ENCODE measurements at regions of chr1 and their contacts with region 1.

Region 1: DNA sequence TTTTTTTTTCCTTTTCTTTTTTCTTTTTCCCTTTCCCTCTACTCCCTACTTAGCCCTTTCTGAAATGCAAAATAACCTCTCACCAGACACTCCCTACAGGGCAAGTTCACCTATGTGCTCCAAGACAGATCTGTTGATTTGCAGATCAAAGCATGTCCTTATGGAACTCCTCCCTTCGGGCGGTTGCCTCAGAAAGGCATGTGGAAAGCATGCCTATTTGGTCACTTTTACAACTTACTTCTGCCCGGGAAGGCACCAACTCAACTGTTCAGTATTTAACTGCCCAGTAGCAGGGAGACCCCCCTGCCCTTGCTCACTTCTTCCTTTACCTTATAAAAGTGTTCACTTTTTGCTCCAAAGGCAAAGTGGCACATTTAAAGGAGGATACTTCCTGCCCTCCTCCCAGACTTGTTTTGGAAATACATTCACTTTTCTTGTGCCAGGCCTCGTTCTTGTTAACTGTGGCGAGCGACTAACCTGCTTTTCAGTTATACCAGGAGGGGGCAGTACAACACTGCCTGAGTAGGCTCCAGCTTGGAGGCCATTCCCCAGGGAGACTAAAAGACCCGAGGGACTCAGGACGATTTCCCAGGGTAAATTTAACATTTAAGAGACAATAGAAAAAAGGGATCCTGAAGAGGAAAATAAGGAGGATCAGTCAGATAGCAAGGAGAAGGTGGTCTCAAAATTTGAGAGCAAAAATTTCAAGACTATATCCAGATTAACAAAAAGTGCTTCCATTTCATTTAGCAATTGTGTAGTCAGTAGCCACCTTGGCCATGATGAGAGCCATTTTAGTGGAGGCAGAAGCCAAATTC is 12.3 kb upstream of the SLAMF7 start:
- DNase-seq: no peak
- H3K4me3 ChIP-seq: peak overlapping the region in 1 of 8 donors; percentile 24
- H3K27ac ChIP-seq: peak overlapping the region in 5 of 8 donors; percentile 12 to 74 (median 66)
- H3K4me1 ChIP-seq: peaks cover 0 to 56% (median 24%) of the 10 kb centered on the region in 6 donors
- H3K27me3 ChIP-seq: no peaks in the 10 kb centered on the region
- CTCF ChIP-seq: peak; percentile 59 to 92 (median 83)
- POLR2A ChIP-seq: no peak

Region 2: GRCh38 chr1:160251011-160251410 is 475.7 kb before region 1 on chr1:
- intact Hi-C with region 1: no loop called
- DNase-seq: no peak
- H3K4me3 ChIP-seq: no peak overlapping the region
- H3K27ac ChIP-seq: no peak overlapping the region
- H3K4me1 ChIP-seq: peaks cover 0 to 27% (median 3%) of the 10 kb centered on the region in 6 donors
- H3K27me3 ChIP-seq: no peaks in the 10 kb centered on the region
- CTCF ChIP-seq: no peak
- POLR2A ChIP-seq: no peak

Region 3: DNA sequence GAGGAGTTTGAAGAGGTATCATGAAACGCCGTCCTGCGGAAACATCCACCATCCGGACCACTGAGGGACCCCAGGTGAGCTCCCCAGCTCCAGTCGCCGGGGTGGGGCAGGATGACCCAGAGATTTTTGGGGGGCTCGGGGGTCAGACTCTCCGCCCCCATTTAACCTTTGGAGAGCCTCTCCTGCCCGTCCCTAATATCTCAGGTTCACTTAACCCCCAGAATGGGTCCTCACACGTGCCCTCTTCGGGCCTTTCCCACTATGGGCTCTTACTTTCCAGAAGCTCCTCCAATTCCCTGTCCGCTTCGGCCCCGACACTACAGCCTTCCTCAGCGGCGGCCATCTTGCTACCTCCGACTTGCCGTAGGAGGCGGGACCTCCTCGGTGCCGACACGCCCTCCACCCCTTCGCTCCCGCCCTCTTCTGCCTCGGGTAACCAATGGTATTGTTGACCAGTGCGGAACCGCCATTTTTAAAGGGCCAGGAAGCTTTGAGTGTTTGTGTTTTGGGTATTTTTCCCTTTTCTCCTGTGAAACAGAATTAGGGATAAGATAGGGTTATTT is 441.8 kb before region 1 on chr1 and contains the start of gene PEX19:
- intact Hi-C with region 1: no loop called
- DNase-seq: peak; percentile 97
- H3K4me3 ChIP-seq: peak within 1 kb of the TSS; percentile 65 to 97 (median 86)
- H3K27ac ChIP-seq: peak within 1 kb of the TSS; percentile 82 to 91 (median 86)
- H3K4me1 ChIP-seq: peaks cover 19 to 38% (median 28%) of the 10 kb centered on the region in 6 donors
- H3K27me3 ChIP-seq: no peaks in the 10 kb centered on the region
- CTCF ChIP-seq: peak in 2 of 11 experiments; percentile 15 to 16
- POLR2A ChIP-seq: peak in 2 of 3 donors; percentile 35 to 53
- total RNA-seq, gene PEX19: 47.1 to 63.8 (median 51.9) TPM

Region 4: DNA sequence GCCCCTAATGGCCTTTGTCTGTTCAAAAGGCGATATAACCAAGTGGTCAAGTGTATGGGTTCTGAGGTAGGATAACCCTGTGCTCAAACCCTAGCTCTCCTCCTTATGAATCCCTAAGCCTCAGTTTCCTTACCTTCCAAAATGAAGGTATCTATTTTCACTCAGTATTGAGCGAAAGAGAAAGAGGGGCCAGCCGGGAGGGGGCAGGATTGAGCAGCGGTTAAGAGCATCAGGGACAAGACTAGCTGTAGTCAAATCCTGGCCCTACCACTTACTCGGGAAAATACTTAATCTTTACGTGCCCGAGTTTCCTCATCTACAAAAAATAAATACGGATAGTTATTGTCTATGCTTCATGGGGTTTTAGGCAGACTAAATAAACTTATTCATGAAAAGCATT is 94.9 kb after region 1 on chr1:
- intact Hi-C with region 1: loop called (anchors 10 kb)
- DNase-seq: no peak
- H3K4me3 ChIP-seq: no peak overlapping the region
- H3K27ac ChIP-seq: no peak overlapping the region
- H3K4me1 ChIP-seq: no peaks in the 10 kb centered on the region
- H3K27me3 ChIP-seq: no peaks in the 10 kb centered on the region
- CTCF ChIP-seq: no peak
- POLR2A ChIP-seq: no peak

Region 5: DNA sequence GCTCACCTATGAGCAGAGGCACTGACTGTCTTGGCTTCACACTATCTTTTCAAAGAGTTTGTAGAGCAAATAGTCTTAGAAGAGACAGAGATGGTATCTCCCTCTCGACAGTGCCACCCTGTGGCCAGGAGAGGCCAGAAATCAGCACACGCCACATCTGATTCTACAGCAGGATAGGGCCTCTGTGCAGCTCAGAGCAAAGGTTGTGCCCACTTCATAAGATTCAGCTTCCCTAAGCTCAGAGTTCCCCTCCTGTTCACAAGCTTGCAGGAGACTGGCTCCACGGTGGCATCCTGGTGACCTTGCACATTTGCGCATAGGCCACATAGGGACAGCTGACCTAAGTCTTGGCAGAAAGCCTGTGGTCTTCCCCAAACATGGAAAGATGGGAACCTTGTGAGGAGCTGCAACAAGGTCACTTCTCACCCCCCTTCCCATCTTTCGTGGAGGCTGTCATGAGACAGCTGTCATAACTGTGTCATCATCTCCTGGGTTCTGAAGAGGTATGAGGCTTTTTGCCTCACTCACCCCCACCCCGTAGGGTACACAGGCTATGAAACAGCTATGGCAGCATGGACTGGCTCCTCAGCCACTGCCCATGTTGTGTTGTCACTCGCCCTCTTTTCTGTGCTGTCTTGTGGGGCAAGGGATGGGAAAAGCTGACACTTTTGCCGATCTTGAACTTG is 224.9 kb after region 1 on chr1:
- intact Hi-C with region 1: loop called (anchors 10 kb)
- DNase-seq: peak; percentile 87
- H3K4me3 ChIP-seq: no peak overlapping the region
- H3K27ac ChIP-seq: no peak overlapping the region
- H3K4me1 ChIP-seq: peaks cover 0 to 24% (median 14%) of the 10 kb centered on the region in 6 donors
- H3K27me3 ChIP-seq: peaks cover 0 to 6% (median 0%) of the 10 kb centered on the region in 7 donors
- CTCF ChIP-seq: peak; percentile 49 to 90 (median 76)
- POLR2A ChIP-seq: no peak